Thyroid gland (tissue), 4 donors: ENCODE measurements at regions of chr19 and their contacts with region 1.

Region 1: DNA sequence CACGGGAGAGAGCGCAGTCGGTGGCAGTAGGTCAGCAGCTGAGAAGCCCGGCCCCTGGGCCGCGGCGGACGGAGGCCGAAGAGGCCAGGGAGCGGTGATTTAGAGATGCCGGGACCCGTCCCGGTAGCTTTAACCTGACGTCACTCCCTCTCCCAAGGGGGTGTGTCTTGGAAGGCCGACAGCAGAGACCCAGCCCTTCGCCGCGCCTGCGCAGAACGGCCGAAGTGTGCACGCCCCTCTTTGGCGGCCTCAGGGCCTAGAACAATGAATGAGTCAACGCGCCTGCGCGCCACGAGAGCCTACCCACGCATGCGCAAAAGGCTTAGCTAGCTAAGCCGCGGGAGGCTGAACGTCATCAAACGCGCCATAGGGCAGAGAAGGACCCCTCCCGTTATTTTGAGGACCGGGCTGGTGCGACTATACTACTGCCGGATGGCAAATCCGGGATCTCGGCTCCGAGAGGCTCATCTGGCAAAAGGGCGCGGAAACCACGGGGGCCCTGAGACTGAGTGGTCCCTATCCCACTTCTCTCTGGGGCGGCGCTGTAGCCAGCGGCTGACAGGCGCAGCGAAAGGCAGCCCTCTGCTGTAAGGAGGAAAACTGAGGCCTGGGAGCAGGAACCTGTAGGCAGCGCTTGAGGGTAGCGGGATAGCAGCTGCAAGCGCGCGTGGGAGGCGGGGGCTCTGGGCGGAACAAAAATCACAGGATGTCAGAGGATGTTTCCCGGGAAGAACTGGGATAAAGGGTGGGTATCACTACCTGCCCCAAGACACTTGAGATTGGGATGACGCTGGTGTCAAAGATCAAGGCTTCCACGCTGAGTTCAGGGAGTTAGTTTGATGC is at the starts of genes IRGQ and ZNF576:
- DNase-seq: peak; percentile 100
- H3K4me3 ChIP-seq: peak within 1 kb of the TSS; percentile 55 to 82 (median 76)
- H3K27ac ChIP-seq: peak within 1 kb of the TSS; percentile 94 to 98 (median 95)
- H3K4me1 ChIP-seq: peaks cover 31 to 33% of the 10 kb centered on the region in 2 donors
- H3K27me3 ChIP-seq: no peaks in the 10 kb centered on the region
- CTCF ChIP-seq: no peak
- POLR2A ChIP-seq: peak in 1 of 2 donors; percentile 84
- total RNA-seq, gene IRGQ: 18.0 to 33.5 (median 23.5) TPM
- total RNA-seq, gene ZNF576: 15.7 to 23.5 (median 17.9) TPM

Region 2: DNA sequence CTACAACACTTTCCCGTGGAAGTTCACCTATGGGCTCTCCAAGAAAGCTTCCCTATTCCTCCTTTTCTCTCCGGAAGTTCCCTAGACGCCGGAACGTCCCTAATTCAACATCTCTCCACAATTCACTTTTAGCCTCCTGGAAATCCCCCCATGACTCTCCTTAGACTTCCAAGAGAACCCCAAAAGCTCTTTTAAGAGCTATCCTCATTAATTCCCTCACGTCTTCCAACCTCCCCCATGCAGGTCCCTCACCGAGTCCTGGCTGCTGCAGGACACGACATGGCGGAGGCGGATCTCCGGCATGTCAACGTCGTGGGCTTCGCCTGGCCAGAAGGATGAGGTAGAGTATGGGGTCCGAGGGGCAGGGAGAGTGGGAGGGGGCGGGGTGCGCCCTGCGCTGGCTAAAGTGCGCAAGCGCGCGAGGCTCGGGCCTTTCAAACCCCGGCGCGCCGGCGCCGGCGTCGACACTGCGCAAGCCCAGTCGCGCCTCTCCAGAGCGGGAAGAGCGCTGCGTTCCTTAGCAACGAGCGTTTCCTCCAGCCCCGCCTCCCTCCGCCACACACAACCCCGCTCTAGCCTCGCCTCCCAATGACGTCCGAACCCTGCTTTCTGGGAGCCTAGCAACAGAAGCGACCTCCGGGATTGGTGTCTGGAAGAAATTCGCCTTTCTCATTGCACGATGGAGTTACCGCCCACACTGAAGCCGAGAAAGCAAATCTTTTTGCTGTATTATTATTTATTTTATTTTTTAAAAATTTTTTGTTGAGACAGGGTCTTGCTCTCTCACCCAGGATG is 20.9 kb before region 1 on chr19 and contains the starts of genes PINLYP and XRCC1:
- intact Hi-C with region 1: loop called (anchors 2 kb)
- DNase-seq: peak; percentile 98
- H3K4me3 ChIP-seq: peak within 1 kb of the TSS; percentile 44 to 98 (median 62)
- H3K27ac ChIP-seq: peak within 1 kb of the TSS; percentile 57 to 77 (median 72)
- H3K4me1 ChIP-seq: peaks cover 16 to 19% of the 10 kb centered on the region in 2 donors
- H3K27me3 ChIP-seq: no peaks in the 10 kb centered on the region
- CTCF ChIP-seq: no peak
- POLR2A ChIP-seq: peak in 1 of 2 donors; percentile 55
- total RNA-seq, gene PINLYP: 11.8 to 19.3 (median 13.2) TPM
- total RNA-seq, gene XRCC1: 29.6 to 38.8 (median 31.3) TPM